Endothelial cell of umbilical vein (primary cell): ENCODE measurements at regions of chr12 and their contacts with region 1.

Region 1: GRCh38 chr12:94532490-94533422 is 73.1 kb upstream of the CEP83 start:
- DNase-seq: peak; percentile 64
- H3K4me3 ChIP-seq: no peak overlapping the region
- H3K27ac ChIP-seq: no peak overlapping the region
- H3K4me1 ChIP-seq: no peaks in the 10 kb centered on the region
- H3K27me3 ChIP-seq: no peaks in the 10 kb centered on the region
- CTCF ChIP-seq: peak; percentile 76 to 79
- POLR2A ChIP-seq: no peak

Region 2: DNA sequence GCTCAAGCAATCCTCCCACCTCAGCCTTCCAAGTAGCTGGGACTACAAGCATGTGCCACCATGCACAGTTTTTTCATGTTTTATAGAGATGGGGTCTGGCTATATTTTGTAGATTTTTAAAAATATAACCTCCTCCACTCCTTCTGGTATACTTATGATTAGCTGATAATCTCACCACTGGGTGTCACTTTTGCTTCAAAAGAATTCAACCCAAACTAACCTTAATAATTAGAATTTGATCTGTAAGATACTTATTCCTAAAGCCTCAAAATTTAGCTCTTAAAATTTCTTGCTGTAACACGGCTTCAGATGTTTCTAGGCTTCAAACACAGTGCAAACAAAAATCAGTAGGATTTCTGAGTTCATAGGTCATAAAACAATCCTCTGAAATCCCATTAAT is 203.4 kb before region 1 on chr12:
- CTCF ChIA-PET with region 1: interaction called, 7 read pairs
- POLR2A ChIA-PET with region 1: no interaction called
- dilution Hi-C with region 1: no loop called
- intact Hi-C with region 1: loop called (anchors 2 kb)
- DNase-seq: no peak
- H3K4me3 ChIP-seq: no peak overlapping the region
- H3K27ac ChIP-seq: no peak overlapping the region
- H3K4me1 ChIP-seq: no peaks in the 10 kb centered on the region
- H3K27me3 ChIP-seq: no peaks in the 10 kb centered on the region
- CTCF ChIP-seq: no peak
- POLR2A ChIP-seq: no peak

Region 3: DNA sequence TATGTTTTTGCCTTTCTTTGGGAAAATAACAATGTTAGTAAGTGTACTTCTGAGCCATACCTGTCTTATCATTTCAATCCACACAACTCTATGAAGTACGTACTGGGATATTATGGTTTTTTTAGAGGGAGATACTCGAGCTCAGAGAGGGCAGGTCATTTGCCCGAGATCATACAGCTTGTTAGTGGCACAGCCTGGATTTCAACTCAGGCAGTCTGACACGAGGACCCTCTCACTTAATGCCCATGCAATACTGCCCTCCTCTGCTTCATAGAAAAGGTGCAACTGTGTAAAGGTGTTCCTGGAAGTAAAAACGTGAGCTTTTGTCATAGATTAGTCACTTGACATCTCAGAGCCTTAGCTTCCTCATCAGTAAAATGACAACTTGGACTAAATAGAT is 342.8 kb after region 1 on chr12:
- CTCF ChIA-PET with region 1: no interaction called
- POLR2A ChIA-PET with region 1: no interaction called
- dilution Hi-C with region 1: no loop called
- intact Hi-C with region 1: no loop called
- DNase-seq: peak; percentile 41
- H3K4me3 ChIP-seq: no peak overlapping the region
- H3K27ac ChIP-seq: no peak overlapping the region
- H3K4me1 ChIP-seq: no peaks in the 10 kb centered on the region
- H3K27me3 ChIP-seq: peaks cover 44 to 52% of the 10 kb centered on the region in 2 experiments
- CTCF ChIP-seq: peak in 1 of 2 donors; percentile 27
- POLR2A ChIP-seq: no peak

Region 4: DNA sequence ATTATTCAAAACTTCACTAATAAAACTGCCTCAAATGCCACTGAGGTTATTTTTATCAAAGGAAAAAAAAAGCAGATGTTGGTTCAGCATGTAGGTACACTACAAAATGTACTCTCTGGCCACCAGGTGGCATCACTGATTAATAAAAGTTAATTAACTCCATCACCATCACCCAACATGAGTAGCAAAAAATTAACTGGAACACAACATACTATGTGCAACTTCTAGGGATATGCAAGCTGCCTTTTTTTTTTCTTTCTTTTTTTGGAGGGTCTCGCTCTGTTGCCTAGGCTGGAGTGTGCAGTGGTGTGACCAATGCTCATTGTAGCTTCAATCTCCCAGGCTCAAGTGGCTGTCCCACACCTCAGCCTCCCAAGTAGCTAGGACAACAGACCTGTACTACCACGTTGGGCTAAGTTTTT is 584.4 kb after region 1 on chr12:
- CTCF ChIA-PET with region 1: no interaction called
- POLR2A ChIA-PET with region 1: no interaction called
- dilution Hi-C with region 1: no loop called
- intact Hi-C with region 1: no loop called
- DNase-seq: peak; percentile 85
- H3K4me3 ChIP-seq: no peak overlapping the region
- H3K27ac ChIP-seq: peak overlapping the region; percentile 88
- H3K4me1 ChIP-seq: peaks cover 25% of the 10 kb centered on the region
- H3K27me3 ChIP-seq: no peaks in the 10 kb centered on the region
- CTCF ChIP-seq: peak; percentile 42 to 45
- POLR2A ChIP-seq: no peak